OCI-LY7 (cell line): ENCODE measurements at regions of chr18 and their contacts with region 1.

Region 1: GRCh38 chr18:34322365-34323289 is 97.9 kb upstream of the NOL4 start:
- DNase-seq: peak; percentile 66
- H3K4me3 ChIP-seq: no peak overlapping the region
- H3K27ac ChIP-seq: no peak overlapping the region
- H3K4me1 ChIP-seq: no peaks in the 10 kb centered on the region
- CTCF ChIP-seq: peak; percentile 79

Region 2: DNA sequence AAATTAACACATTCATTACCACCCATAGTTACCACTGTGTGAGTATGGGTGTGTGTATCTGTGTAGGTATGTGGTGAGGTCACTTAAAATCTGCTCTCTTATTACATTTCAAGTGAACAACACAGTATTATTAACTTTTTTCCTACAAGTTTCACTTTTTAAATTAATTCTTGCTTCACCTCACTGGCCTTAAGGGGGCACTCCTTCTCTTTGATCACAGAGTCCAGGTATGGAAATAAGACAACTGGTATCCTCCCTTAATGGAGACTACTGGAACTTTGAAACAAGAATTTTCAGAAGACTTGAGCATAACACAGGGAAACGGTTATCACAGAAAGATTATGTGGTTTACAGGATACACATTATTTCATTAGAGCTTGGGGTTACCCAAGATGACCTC is 488.8 kb before region 1 on chr18:
- CTCF ChIA-PET with region 1: no interaction called
- POLR2A ChIA-PET with region 1: interaction called, 4 read pairs
- intact Hi-C with region 1: loop called (anchors 5 kb)
- DNase-seq: peak; percentile 41
- H3K4me3 ChIP-seq: no peak overlapping the region
- H3K27ac ChIP-seq: no peak overlapping the region
- H3K4me1 ChIP-seq: peaks cover 23% of the 10 kb centered on the region
- CTCF ChIP-seq: peak; percentile 73

Region 3: DNA sequence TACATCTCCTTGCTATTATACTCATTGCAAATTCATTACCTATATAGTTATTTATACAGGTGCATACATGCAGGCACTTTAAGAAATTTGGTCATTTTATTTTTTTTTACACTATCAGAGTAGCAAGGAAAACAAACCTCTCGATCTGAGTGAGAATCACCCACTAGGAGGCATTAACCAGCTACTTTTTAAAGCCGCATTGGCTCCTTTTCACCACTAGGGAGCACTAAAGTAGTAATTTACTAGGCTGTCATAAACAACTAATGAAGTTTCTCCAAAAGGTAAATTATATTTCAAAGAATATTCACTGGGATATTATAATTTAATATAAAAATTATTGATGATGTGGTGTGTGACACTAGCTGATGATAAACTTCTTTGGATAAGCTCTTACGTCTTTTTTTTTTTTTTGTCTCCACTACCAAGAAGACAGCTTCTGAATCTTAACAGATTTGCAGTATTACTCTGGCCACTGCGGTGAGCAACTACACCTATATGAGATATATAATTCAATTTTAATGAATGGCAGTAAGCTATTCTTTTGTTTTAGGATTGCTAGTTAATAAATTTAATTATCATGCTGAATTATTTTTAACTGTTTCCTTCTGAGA is 199.8 kb before region 1 on chr18:
- CTCF ChIA-PET with region 1: no interaction called
- POLR2A ChIA-PET with region 1: no interaction called
- intact Hi-C with region 1: loop called (anchors 10 kb)
- DNase-seq: peak; percentile 68
- H3K4me3 ChIP-seq: no peak overlapping the region
- H3K27ac ChIP-seq: no peak overlapping the region
- H3K4me1 ChIP-seq: peaks cover 13% of the 10 kb centered on the region
- CTCF ChIP-seq: peak; percentile 87